ENCODE measurements at regions of chr16 and their contacts with region 1.

Region 1: GRCh38 chr16:56389554-56389953 is 35.8 kb downstream of the AMFR start:
- DNase-seq: no peak
- H3K4me3 Mint-ChIP-seq: no peak overlapping the region
- H3K27ac Mint-ChIP-seq: no peak overlapping the region
- H3K4me1 Mint-ChIP-seq: peaks cover 10% of the 10 kb centered on the region
- H3K27me3 Mint-ChIP-seq: no peaks in the 10 kb centered on the region

Region 2: DNA sequence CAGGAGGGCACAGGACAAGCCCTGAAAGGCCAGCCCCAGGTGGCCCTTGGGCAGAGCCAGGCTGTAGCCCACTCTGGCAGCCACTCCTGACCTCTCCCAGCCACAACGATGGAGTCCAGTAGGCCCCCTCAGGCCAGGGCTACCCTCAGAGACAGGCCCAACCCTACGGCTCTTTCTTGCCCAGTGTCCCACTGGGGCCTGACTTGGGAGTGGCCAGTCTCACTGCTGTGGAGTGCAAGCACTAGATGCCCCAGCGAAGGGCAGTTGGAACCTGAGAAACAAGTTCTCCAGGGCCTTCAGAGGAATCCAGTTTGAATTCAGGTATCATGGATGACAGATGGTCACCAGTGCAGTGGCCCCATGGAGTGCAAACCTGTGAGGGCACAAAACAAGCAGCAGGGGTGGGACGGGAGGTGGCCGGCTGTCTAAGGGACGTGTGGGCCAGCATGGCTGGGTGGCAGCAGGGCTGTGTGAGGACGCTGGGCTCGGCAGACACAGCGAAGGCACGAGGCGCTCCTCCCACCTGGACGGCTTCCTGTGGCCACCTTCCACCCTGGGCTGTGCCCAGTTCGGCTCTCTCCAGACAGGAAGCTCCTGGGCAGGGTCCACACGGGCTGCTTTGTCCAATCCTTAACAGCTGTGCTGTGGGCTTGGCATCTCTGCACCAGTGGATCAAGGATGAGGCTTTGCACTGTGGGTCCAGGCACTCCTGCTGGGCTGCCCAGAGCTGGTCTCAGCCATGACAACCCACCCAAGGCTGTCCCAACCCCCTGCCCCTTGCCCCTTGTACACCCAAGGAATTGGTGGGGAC is 36.2 kb before region 1 on chr16:
- intact Hi-C with region 1: no loop called
- DNase-seq: no peak
- H3K4me3 Mint-ChIP-seq: no peak overlapping the region
- H3K27ac Mint-ChIP-seq: no peak overlapping the region
- H3K4me1 Mint-ChIP-seq: peaks cover 21% of the 10 kb centered on the region
- H3K27me3 Mint-ChIP-seq: peaks cover 2% of the 10 kb centered on the region

Region 3: GRCh38 chr16:56373003-56373402 is 16.6 kb before region 1 on chr16:
- intact Hi-C with region 1: loop called (anchors 2 kb)
- DNase-seq: no peak
- H3K4me3 Mint-ChIP-seq: no peak overlapping the region
- H3K27ac Mint-ChIP-seq: no peak overlapping the region
- H3K4me1 Mint-ChIP-seq: peaks cover 10% of the 10 kb centered on the region
- H3K27me3 Mint-ChIP-seq: no peaks in the 10 kb centered on the region

Region 4: GRCh38 chr16:56576585-56577293 is 187.2 kb after region 1 on chr16:
- intact Hi-C with region 1: no loop called
- DNase-seq: peak; percentile 96
- H3K4me3 Mint-ChIP-seq: no peak overlapping the region
- H3K27ac Mint-ChIP-seq: no peak overlapping the region
- H3K4me1 Mint-ChIP-seq: peaks cover 4% of the 10 kb centered on the region
- H3K27me3 Mint-ChIP-seq: peaks cover 16% of the 10 kb centered on the region

Measured in activated CD4-positive, alpha-beta T cell treated with anti-CD3 and anti-CD28 coated beads, Interleukin-2, amount 10 ng/mL, durations not matched to agents 24 days and 14 days (primary cell).